ENCODE measurements at regions of chr6 and their contacts with region 1.

Region 1: GRCh38 chr6:135423649-135424128 is 73.9 kb downstream of the AHI1 start:
- DNase-seq: no peak
- H3K4me3 Mint-ChIP-seq: no peak overlapping the region
- H3K27ac Mint-ChIP-seq: peak overlapping the region; percentile 38
- H3K4me1 Mint-ChIP-seq: peaks cover 32% of the 10 kb centered on the region
- H3K27me3 Mint-ChIP-seq: no peaks in the 10 kb centered on the region

Region 2: GRCh38 chr6:134720353-134721059 is 703.2 kb before region 1 on chr6:
- intact Hi-C with region 1: no loop called
- DNase-seq: no peak
- H3K4me3 Mint-ChIP-seq: no peak overlapping the region
- H3K27ac Mint-ChIP-seq: no peak overlapping the region
- H3K4me1 Mint-ChIP-seq: no peaks in the 10 kb centered on the region
- H3K27me3 Mint-ChIP-seq: peaks cover 13% of the 10 kb centered on the region

Region 3: GRCh38 chr6:135014353-135014832 is 409.3 kb before region 1 on chr6:
- intact Hi-C with region 1: loop called (anchors 10 kb)
- DNase-seq: no peak
- H3K4me3 Mint-ChIP-seq: peak overlapping the region; percentile 30
- H3K27ac Mint-ChIP-seq: peak overlapping the region; percentile 91
- H3K4me1 Mint-ChIP-seq: peaks cover 57% of the 10 kb centered on the region
- H3K27me3 Mint-ChIP-seq: no peaks in the 10 kb centered on the region

Region 4: GRCh38 chr6:135195522-135195921 is 228.2 kb before region 1 on chr6:
- intact Hi-C with region 1: loop called (anchors 5 kb)
- DNase-seq: no peak
- H3K4me3 Mint-ChIP-seq: no peak overlapping the region
- H3K27ac Mint-ChIP-seq: peak overlapping the region; percentile 63
- H3K4me1 Mint-ChIP-seq: peaks cover 56% of the 10 kb centered on the region
- H3K27me3 Mint-ChIP-seq: no peaks in the 10 kb centered on the region

Region 5: DNA sequence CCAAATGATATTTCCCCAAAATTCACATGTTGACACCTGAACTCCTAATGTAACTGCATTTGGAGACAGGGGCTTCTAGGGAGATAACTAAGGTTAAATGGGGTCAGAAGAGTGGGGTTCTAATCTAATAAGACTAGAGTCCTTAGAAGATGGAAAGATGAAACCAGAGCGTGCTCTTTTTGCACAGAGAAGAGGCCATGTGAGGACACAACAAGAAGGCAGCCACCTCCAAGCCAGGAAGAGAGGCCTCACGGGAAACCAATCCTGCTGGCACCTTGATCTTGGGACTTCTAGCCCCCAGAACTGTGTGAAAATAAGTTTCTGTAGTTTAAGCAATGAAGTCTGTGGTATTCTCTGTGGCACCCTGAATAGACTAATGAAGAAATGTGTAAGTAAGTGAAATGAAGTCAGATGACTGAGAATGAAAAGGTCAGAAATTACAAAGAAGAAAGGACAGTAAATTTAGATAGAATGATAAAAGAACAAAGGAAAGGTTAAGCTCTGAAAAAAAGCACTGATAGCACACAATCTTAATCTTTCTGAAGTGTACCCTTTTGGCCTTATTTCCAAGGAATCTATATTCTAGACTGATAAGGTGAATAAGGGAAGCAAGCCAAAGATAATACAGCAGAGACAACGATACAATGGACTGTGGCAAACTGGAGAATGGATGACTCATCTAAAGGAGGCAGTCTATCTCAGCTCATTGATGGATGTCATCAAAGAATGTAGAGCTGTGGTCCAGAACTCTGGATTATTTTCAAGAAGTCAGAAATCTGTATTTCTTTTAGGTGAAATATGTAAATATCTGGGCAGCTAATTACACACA is 132.2 kb before region 1 on chr6:
- intact Hi-C with region 1: loop called (anchors 5 kb)
- DNase-seq: no peak
- H3K4me3 Mint-ChIP-seq: no peak overlapping the region
- H3K27ac Mint-ChIP-seq: no peak overlapping the region
- H3K4me1 Mint-ChIP-seq: peaks cover 21% of the 10 kb centered on the region
- H3K27me3 Mint-ChIP-seq: no peaks in the 10 kb centered on the region